Activated CD8-positive, alpha-beta T cell treated with anti-CD3 and anti-CD28 coated beads for 36 hours (primary cell): ENCODE measurements at regions of chr11 and their contacts with region 1.

Region 1: GRCh38 chr11:14907411-14908213 is 15.6 kb upstream of the CYP2R1 start:
- DNase-seq: peak; percentile 93
- ATAC-seq: peak; percentile 59
- H3K4me3 Mint-ChIP-seq: no peak overlapping the region
- H3K27ac Mint-ChIP-seq: no peak overlapping the region
- H3K4me1 Mint-ChIP-seq: peaks cover 48% of the 10 kb centered on the region
- H3K27me3 Mint-ChIP-seq: no peaks in the 10 kb centered on the region
- CTCF ChIP-seq: peak; percentile 90

Region 2: DNA sequence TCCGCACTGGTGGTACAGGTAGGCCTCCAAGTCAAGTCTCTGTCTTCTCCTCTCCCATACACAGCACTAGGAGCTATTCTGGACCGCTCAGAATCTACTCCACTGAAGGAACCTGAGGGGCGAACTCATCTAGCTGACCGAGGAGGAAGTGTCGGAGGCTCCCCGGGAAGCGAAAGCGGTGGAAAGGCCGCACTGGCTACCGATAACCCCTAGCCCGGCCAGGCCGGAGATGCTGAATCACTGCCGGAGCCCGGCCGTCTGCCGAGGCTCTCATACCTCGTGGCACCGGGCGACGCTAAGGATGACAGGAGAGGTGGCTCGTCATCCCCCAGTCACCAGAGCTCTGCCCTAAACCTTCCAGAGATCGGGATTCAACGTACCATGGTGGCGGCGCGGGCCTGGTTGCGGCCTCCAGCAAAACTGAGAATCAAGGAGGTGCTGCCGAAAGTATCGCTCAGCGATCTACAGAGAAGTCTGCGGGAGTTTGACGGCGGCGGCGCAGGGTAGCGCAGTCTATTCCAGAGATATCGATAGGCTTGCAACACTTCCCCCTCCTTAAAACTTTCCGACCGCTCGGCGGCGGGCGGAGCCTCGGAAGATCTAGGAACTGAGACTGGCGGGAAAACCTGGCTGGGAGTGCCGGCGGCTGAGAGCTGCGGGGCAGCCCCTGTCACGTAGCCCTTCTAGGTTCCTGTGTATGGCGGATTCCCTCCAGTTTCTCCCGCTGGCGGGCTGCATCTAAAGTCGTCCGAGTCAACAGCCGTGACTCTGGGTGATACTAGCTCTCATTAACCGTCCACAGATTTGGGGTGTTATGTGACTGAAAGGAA is 387.5 kb before region 1 on chr11 and contains the start of gene PSMA1:
- CTCF ChIA-PET with region 1: interaction called, 10 read pairs
- POLR2A ChIA-PET with region 1: interaction called, 7 read pairs
- intact Hi-C with region 1: loop called (anchors 5 kb)
- DNase-seq: peak; percentile 99
- ATAC-seq: peak; percentile 89
- H3K4me3 Mint-ChIP-seq: peak within 1 kb of the TSS; percentile 93
- H3K27ac Mint-ChIP-seq: peak within 1 kb of the TSS; percentile 97
- H3K4me1 Mint-ChIP-seq: peaks cover 26% of the 10 kb centered on the region
- H3K27me3 Mint-ChIP-seq: no peaks in the 10 kb centered on the region
- CTCF ChIP-seq: no peak
- total RNA-seq, gene PSMA1: 329 to 338 TPM

Region 3: GRCh38 chr11:14643697-14644225 is 263.9 kb before region 1 on chr11 and contains the start of gene PDE3B:
- CTCF ChIA-PET with region 1: interaction called, 55 read pairs
- POLR2A ChIA-PET with region 1: interaction called, 23 read pairs
- intact Hi-C with region 1: loop called (anchors 5 kb)
- DNase-seq: peak; percentile 87
- ATAC-seq: peak; percentile 78
- H3K4me3 Mint-ChIP-seq: peak within 1 kb of the TSS; percentile 79
- H3K27ac Mint-ChIP-seq: peak within 1 kb of the TSS; percentile 90
- H3K4me1 Mint-ChIP-seq: peaks cover 41% of the 10 kb centered on the region
- H3K27me3 Mint-ChIP-seq: no peaks in the 10 kb centered on the region
- CTCF ChIP-seq: no peak
- total RNA-seq, gene PDE3B: 42.3 to 43.1 TPM

Region 4: GRCh38 chr11:14858404-14858803 is 49.2 kb before region 1 on chr11:
- CTCF ChIA-PET with region 1: interaction called, 15 read pairs
- POLR2A ChIA-PET with region 1: no interaction called
- intact Hi-C with region 1: no loop called
- DNase-seq: no peak
- ATAC-seq: no peak
- H3K4me3 Mint-ChIP-seq: no peak overlapping the region
- H3K27ac Mint-ChIP-seq: peak overlapping the region; percentile 22
- H3K4me1 Mint-ChIP-seq: peaks cover 24% of the 10 kb centered on the region
- H3K27me3 Mint-ChIP-seq: no peaks in the 10 kb centered on the region
- CTCF ChIP-seq: no peak

Region 5: GRCh38 chr11:14954581-14954980 is 47.0 kb after region 1 on chr11:
- CTCF ChIA-PET with region 1: interaction called, 13 read pairs
- POLR2A ChIA-PET with region 1: no interaction called
- intact Hi-C with region 1: no loop called
- DNase-seq: no peak
- ATAC-seq: no peak
- H3K4me3 Mint-ChIP-seq: no peak overlapping the region
- H3K27ac Mint-ChIP-seq: no peak overlapping the region
- H3K4me1 Mint-ChIP-seq: no peaks in the 10 kb centered on the region
- H3K27me3 Mint-ChIP-seq: no peaks in the 10 kb centered on the region
- CTCF ChIP-seq: no peak

Region 6: GRCh38 chr11:15053191-15053685 is 145.6 kb after region 1 on chr11:
- CTCF ChIA-PET with region 1: interaction called, 18 read pairs
- POLR2A ChIA-PET with region 1: no interaction called
- intact Hi-C with region 1: no loop called
- DNase-seq: peak; percentile 51
- ATAC-seq: peak; percentile 89
- H3K4me3 Mint-ChIP-seq: peak overlapping the region; percentile 6
- H3K27ac Mint-ChIP-seq: peak overlapping the region; percentile 62
- H3K4me1 Mint-ChIP-seq: peaks cover 20% of the 10 kb centered on the region
- H3K27me3 Mint-ChIP-seq: peaks cover 5% of the 10 kb centered on the region
- CTCF ChIP-seq: no peak